CD4-positive, alpha-beta T cell (primary cell): ENCODE measurements at regions of chr2 and their contacts with region 1.

Region 1: GRCh38 chr2:233404222-233404621 is 49.9 kb downstream of the DGKD start:
- DNase-seq: peak; percentile 54 to 86 (median 70)
- ATAC-seq: peak; percentile 80
- H3K4me3 ChIP-seq: no peak overlapping the region
- H3K4me3 Mint-ChIP-seq: peak overlapping the region; percentile 57
- H3K27ac ChIP-seq: peak overlapping the region in 1 of 2 donors; percentile 24
- H3K27ac Mint-ChIP-seq: peak overlapping the region; percentile 85
- H3K4me1 ChIP-seq: peaks cover 41% of the 10 kb centered on the region
- H3K4me1 Mint-ChIP-seq: peaks cover 83% of the 10 kb centered on the region
- H3K27me3 ChIP-seq: no peaks in the 10 kb centered on the region
- H3K27me3 Mint-ChIP-seq: no peaks in the 10 kb centered on the region
- CTCF ChIP-seq: peak; percentile 87

Region 2: DNA sequence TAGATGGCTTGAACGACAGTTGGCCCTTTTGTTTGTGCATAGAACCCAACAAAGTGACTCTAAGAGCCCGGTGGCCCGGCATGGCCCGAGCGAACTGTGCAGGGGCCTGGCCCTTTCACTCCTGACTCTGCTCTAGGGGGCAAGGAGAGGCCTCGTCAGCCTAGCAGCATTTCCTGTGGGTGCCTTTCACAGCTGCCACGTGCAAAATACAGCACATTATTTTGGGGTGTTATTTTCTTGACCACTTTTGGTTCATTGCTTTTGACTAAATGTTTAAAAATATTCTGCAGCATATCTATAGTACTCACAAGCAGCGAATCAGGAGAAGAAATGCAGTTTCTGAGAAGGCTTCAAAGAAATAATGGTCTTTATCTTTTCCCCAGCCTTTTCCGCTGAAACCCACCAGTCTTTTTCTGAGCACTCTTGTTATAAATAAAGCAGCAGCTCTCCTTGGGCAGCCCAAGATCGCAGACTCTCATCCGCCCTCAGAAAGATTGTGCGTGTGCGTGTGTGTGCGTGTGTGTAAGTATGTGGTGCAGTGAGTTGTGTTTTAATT is 18.7 kb before region 1 on chr2:
- CTCF ChIA-PET with region 1: no interaction called
- POLR2A ChIA-PET with region 1: interaction called, 6 read pairs
- intact Hi-C with region 1: loop called in 1 of 2 experiments (anchors 2 kb)
- DNase-seq: peak in 8 of 14 experiments; percentile 37 to 62 (median 54)
- ATAC-seq: peak; percentile 72
- H3K4me3 ChIP-seq: no peak overlapping the region
- H3K4me3 Mint-ChIP-seq: peak overlapping the region; percentile 81
- H3K27ac ChIP-seq: peak overlapping the region; percentile 40 to 52
- H3K27ac Mint-ChIP-seq: peak overlapping the region; percentile 90
- H3K4me1 ChIP-seq: peaks cover 55% of the 10 kb centered on the region
- H3K4me1 Mint-ChIP-seq: peaks cover 71% of the 10 kb centered on the region
- H3K27me3 ChIP-seq: no peaks in the 10 kb centered on the region
- H3K27me3 Mint-ChIP-seq: no peaks in the 10 kb centered on the region
- CTCF ChIP-seq: no peak

Region 3: DNA sequence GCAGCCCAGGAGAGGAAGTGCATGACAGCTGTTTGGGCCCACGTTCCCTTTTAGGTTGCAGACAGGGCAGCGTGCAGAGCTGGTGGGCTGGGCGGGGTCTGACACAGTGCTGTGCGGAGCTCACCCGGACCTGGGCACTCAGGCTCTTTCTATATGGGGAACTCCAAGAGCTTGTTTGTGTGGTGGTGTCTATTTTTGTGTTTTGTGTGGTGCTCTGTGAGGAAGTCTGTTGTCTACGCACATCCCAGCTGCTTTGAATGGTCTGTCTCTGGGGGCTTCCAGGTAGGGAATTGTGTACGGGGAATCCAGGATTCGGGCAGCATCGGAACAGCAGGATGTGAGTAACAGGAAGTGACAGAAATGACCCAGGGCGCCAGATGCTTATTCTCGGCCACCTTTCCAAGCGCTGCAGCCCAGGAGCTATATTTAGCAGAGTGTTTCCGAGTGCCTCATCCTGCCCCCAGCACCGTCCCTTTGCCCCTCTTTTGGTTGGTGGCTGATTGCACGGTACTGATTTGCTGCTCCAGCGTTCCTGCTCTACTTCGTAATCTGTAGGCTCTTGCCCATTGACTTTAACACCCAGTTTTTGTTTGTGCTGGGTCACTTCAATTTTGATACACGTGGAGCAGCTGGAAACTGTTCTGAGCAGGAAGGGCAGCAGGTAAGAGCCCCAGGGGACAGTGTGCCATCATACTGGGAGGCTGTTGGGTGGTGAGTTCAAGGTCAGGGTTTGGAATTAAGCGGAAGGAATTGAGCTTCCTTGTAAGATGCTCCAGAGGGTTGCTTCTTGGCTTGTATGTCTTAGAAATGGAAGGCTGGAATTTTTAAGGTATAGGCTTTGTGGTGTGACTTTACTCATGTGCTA is 14.8 kb after region 1 on chr2:
- CTCF ChIA-PET with region 1: interaction called, 30 read pairs
- POLR2A ChIA-PET with region 1: interaction called, 41 read pairs
- intact Hi-C with region 1: loop called in 1 of 2 experiments (anchors 2 kb)
- DNase-seq: peak in 13 of 14 experiments; percentile 31 to 81 (median 63)
- ATAC-seq: peak; percentile 47
- H3K4me3 ChIP-seq: peak overlapping the region; percentile 56
- H3K4me3 Mint-ChIP-seq: peak overlapping the region; percentile 89
- H3K27ac ChIP-seq: peak overlapping the region; percentile 66 to 77
- H3K27ac Mint-ChIP-seq: peak overlapping the region; percentile 95
- H3K4me1 ChIP-seq: peaks cover 98% of the 10 kb centered on the region
- H3K4me1 Mint-ChIP-seq: peaks cover 98% of the 10 kb centered on the region
- H3K27me3 ChIP-seq: no peaks in the 10 kb centered on the region
- H3K27me3 Mint-ChIP-seq: no peaks in the 10 kb centered on the region
- CTCF ChIP-seq: no peak

Region 4: DNA sequence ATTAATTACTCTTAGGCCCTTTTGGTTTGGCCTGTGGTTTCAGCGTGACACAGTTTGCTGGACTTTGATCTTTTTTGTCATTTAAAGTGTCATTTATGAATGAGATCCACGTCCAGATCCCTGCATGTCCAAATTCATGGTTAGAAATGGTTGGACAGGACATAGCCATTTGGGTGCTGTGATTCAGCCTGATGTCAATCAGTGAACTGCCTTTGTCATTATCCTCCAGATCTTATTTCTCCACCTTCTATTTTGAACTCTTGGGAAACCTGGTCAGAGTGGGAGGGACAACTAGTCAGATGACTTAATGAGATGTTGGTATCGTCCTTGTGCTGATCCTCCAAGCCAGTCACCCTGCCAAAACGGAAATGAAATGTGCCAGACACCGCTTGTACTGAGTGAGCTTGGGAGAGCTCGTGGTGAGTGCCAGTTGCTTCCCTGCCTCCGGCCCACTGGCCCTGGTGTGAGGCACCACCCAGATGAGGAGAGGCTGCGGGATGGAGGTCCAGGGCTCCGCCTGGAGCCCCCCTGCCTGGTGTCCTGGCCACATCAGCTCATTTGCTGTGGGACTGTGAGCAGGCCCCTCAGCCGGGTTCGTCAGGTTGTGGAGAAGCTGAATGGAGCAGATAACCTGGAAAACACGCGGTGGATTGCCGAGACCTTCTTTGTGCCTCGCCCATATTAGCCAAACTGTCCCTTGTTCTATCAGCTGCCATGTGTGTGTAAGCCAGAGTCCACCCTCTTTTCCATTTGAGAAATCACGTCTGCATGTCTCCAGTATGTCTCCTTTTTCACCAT is 20.1 kb after region 1 on chr2:
- CTCF ChIA-PET with region 1: interaction called, 30 read pairs
- POLR2A ChIA-PET with region 1: interaction called, 41 read pairs
- intact Hi-C with region 1: loop called in 1 of 2 experiments (anchors 2 kb)
- DNase-seq: peak in 1 of 14 experiments; percentile 25
- ATAC-seq: no peak
- H3K4me3 ChIP-seq: no peak overlapping the region
- H3K4me3 Mint-ChIP-seq: peak overlapping the region; percentile 18
- H3K27ac ChIP-seq: peak overlapping the region; percentile 73 to 82
- H3K27ac Mint-ChIP-seq: peak overlapping the region; percentile 95
- H3K4me1 ChIP-seq: peaks cover 86% of the 10 kb centered on the region
- H3K4me1 Mint-ChIP-seq: peaks cover 95% of the 10 kb centered on the region
- H3K27me3 ChIP-seq: no peaks in the 10 kb centered on the region
- H3K27me3 Mint-ChIP-seq: no peaks in the 10 kb centered on the region
- CTCF ChIP-seq: no peak

Region 5: DNA sequence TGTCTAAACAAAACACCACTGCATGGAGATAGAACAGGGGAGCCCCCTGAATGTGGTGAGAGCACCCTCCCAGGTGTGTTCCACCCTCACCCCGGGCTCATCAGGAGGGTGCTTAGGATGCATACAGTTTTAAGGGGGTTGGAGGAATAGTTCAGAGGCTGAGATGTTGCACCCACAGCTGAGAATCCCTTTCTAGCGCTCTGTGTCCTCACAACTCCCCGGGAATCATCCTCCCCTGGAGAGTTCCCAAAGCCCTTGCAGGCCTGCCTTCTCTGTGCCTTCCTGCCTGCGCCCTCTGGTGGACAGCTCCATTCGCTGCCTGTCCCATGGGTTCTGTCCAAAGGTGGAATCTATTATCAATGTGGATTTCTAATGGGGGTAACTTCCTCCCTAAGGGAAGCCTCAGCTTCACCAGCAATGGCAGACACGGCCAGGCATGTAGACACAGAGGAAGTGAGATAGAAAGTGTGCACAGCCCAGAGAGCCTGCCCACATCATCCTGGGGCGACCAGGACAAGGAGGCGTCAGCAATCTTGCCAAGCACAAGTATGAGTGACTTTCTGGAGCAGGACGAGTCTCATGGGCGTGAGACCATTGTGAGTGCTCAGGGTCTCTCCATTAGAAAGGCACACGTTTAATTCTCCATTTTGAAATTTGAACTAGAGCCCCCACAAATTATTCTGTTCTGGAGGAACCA is 307.2 kb after region 1 on chr2:
- CTCF ChIA-PET with region 1: no interaction called
- POLR2A ChIA-PET with region 1: no interaction called
- intact Hi-C with region 1: loop called in 1 of 2 experiments (anchors 5 kb)
- DNase-seq: peak; percentile 44 to 73 (median 58)
- ATAC-seq: peak; percentile 62
- H3K4me3 ChIP-seq: no peak overlapping the region
- H3K4me3 Mint-ChIP-seq: no peak overlapping the region
- H3K27ac ChIP-seq: no peak overlapping the region
- H3K27ac Mint-ChIP-seq: no peak overlapping the region
- H3K4me1 ChIP-seq: no peaks in the 10 kb centered on the region
- H3K4me1 Mint-ChIP-seq: no peaks in the 10 kb centered on the region
- H3K27me3 ChIP-seq: peaks cover 4 to 6% of the 10 kb centered on the region in 2 experiments
- H3K27me3 Mint-ChIP-seq: peaks cover 29% of the 10 kb centered on the region
- CTCF ChIP-seq: peak; percentile 78